Activated T-helper 2 cell treated with anti-CD3 and anti-CD28 coated beads, Interferon-gamma antibody, Interleukin-2, Interleukin-4, amounts not matched to agents 10 μg/mL and 5 μg/mL and 100 μg/mL, durations not matched to agents 14 hours and 24 hours and 36 hours (primary cell): ENCODE measurements at regions of chr22 and their contacts with region 1.

Region 1: DNA sequence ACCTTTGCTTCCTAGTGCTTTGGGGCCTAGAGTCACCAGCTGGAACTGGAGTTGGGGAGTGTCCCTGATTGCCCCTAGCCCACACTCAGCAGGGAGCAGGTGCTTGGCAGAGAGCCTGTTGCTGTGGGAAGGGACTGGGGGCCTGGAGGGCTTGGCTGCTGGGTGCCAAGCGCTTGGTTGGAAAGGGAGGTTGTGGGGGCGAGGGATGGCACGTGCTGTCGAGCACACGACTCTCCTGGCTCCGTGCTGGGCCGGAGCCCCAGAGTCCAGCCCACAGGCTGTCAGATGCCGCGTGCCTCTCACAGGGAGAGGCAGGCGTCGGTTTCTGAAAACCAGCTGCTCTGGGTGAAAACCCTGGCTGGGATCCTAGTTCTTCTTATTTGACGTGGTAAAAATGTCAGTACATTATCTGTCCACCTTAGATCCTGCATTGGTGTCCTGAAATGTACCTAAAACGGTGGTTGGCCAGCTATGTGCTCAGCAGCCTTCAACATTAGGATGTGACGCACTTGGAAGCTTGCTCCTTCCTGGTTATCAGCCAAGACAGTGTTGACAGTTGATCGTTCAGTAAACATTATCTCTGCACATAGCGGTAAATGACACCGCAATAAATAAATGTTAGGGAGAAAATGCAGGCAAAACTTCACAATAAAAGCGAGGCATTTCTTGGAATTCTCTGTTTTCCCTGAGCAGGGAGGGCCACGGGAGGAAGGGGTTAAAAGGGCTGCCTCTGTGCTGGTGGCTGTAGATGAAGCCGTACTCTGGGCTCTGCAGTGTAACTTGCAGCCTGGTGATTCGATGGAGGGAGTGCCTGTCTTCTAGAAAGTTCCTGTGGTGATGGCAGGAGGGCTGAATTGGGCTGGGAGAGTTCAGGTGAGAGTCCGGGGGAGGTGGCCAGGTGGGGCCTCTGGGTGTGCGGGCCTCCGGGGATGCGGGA is 29.2 kb downstream of the GRAMD4 start:
- DNase-seq: no peak
- H3K4me3 Mint-ChIP-seq: no peak overlapping the region
- H3K27ac Mint-ChIP-seq: peak overlapping the region; percentile 68
- H3K4me1 Mint-ChIP-seq: peaks cover 36% of the 10 kb centered on the region
- H3K27me3 Mint-ChIP-seq: no peaks in the 10 kb centered on the region

Region 2: GRCh38 chr22:46576556-46577367 is 72.6 kb before region 1 on chr22:
- intact Hi-C with region 1: loop called (anchors 5 kb)
- DNase-seq: peak; percentile 52
- H3K4me3 Mint-ChIP-seq: peak overlapping the region; percentile 82
- H3K27ac Mint-ChIP-seq: peak overlapping the region; percentile 82
- H3K4me1 Mint-ChIP-seq: peaks cover 43% of the 10 kb centered on the region
- H3K27me3 Mint-ChIP-seq: no peaks in the 10 kb centered on the region

Region 3: GRCh38 chr22:46604306-46604690 is 45.1 kb before region 1 on chr22:
- intact Hi-C with region 1: loop called (anchors 1 kb)
- DNase-seq: peak; percentile 73
- H3K4me3 Mint-ChIP-seq: peak overlapping the region; percentile 80
- H3K27ac Mint-ChIP-seq: peak overlapping the region; percentile 98
- H3K4me1 Mint-ChIP-seq: peaks cover 14% of the 10 kb centered on the region
- H3K27me3 Mint-ChIP-seq: no peaks in the 10 kb centered on the region

Region 4: DNA sequence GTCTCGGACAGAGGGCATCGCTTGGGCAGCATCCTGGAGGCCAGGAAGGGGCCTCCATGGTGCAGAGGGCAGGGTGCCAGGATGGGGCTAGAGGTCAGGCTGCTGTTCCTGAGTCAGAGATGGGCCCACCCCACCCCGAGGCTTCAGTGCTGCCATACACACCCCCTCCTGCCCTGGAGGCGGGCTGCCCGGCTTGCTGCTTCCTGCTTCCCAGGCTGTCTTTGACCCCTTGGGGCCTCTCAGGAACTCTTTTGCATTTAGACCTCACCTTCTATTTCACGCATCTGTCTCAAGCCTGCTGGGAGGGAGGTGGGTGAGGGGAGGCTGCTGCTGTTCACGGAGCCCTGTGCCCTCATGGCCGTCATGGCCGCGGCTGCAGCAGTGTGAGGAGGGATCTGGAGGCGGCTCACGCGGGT is 35.8 kb before region 1 on chr22:
- intact Hi-C with region 1: loop called (anchors 2 kb)
- DNase-seq: peak; percentile 12
- H3K4me3 Mint-ChIP-seq: peak overlapping the region; percentile 80
- H3K27ac Mint-ChIP-seq: peak overlapping the region; percentile 89
- H3K4me1 Mint-ChIP-seq: peaks cover 27% of the 10 kb centered on the region
- H3K27me3 Mint-ChIP-seq: no peaks in the 10 kb centered on the region

Region 5: GRCh38 chr22:46737976-46738646 is 88.7 kb after region 1 on chr22 and contains the start of gene CERK:
- intact Hi-C with region 1: loop called (anchors 2 kb)
- DNase-seq: peak; percentile 62
- H3K4me3 Mint-ChIP-seq: peak within 1 kb of the TSS; percentile 100
- H3K27ac Mint-ChIP-seq: peak within 1 kb of the TSS; percentile 99
- H3K4me1 Mint-ChIP-seq: peaks cover 34% of the 10 kb centered on the region
- H3K27me3 Mint-ChIP-seq: no peaks in the 10 kb centered on the region
- total RNA-seq, gene CERK: 57.1 and 62.8 TPM in 2 replicates